A549 (cell line): ENCODE measurements at regions of chr17 and their contacts with region 1.

Region 1: DNA sequence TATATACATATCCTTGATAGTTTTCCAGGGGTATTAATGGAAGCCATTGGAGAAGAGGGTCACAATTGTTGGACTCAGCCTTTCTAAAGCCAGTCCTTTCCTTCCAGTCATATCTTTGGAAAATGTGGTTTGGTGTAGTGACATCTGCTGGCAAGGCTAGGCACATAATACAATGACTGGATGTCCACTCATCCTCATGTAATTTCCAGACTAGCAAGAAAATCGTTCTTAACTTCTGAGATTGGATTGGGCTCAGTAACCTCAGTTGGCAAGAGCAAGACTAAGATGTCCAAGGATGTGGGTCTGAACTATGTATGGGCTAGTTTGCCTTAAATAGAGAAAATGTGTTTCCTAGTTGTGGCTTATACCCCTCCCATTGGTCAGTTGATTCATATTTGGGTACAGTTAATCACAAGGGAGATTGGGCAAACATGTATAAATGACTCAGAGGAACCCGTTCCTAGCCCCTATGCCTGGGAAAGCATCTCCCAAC is 8.7 kb upstream of the KAT7 start:
- DNase-seq: peak; percentile 34 to 60
- ATAC-seq: peak; percentile 84 to 86
- H3K4me3 ChIP-seq: no peak overlapping the region
- H3K27ac ChIP-seq: no peak overlapping the region
- H3K4me1 ChIP-seq: no peaks in the 10 kb centered on the region
- CTCF ChIP-seq: peak; percentile 54
- EP300 ChIP-seq: no peak
- POLR2A ChIP-seq: no peak
- RAD21 ChIP-seq: peak; percentile 37 to 54; a peak in 4 of 5 replicates

Region 2: GRCh38 chr17:49763735-49764558 is 15.8 kb before region 1 on chr17 and contains the start of gene FAM117A:
- CTCF ChIA-PET with region 1: interaction called, 12 read pairs
- POLR2A ChIA-PET with region 1: interaction called, 12 read pairs
- DNase-seq: peak; percentile 99 to 100
- ATAC-seq: peak; percentile 98 to 99
- H3K4me3 ChIP-seq: peak within 1 kb of the TSS; percentile 61
- H3K27ac ChIP-seq: peak within 1 kb of the TSS; percentile 57 to 89
- H3K4me1 ChIP-seq: peaks cover 9% of the 10 kb centered on the region
- CTCF ChIP-seq: no peak
- EP300 ChIP-seq: no peak
- POLR2A ChIP-seq: peak; percentile 44; the same call in 1 of the 2 replicates
- RAD21 ChIP-seq: no peak
- polyA plus RNA-seq, gene FAM117A: 1.8 TPM in 2 replicates

Region 3: GRCh38 chr17:49843774-49844350 is 64.1 kb after region 1 on chr17:
- CTCF ChIA-PET with region 1: no interaction called
- POLR2A ChIA-PET with region 1: no interaction called
- DNase-seq: peak; percentile 52 to 69
- ATAC-seq: peak in 1 of 2 experiments; percentile 74; a peak in 3 of 6 replicates
- H3K4me3 ChIP-seq: no peak overlapping the region
- H3K27ac ChIP-seq: no peak overlapping the region
- H3K4me1 ChIP-seq: peaks cover 7% of the 10 kb centered on the region; the same call in 1 of the 3 replicates
- CTCF ChIP-seq: peak; percentile 46
- EP300 ChIP-seq: no peak
- POLR2A ChIP-seq: no peak
- RAD21 ChIP-seq: peak; percentile 35 to 52; a peak in 3 of 5 replicates

Region 4: GRCh38 chr17:49952209-49952911 is 172.6 kb after region 1 on chr17:
- CTCF ChIA-PET with region 1: no interaction called
- POLR2A ChIA-PET with region 1: no interaction called
- DNase-seq: peak; percentile 85 to 98
- ATAC-seq: peak; percentile 94 to 98
- H3K4me3 ChIP-seq: no peak overlapping the region
- H3K27ac ChIP-seq: no peak overlapping the region
- H3K4me1 ChIP-seq: peaks cover 5% of the 10 kb centered on the region; the same call in 1 of the 3 replicates
- CTCF ChIP-seq: peak; percentile 91
- EP300 ChIP-seq: no peak
- POLR2A ChIP-seq: no peak
- RAD21 ChIP-seq: peak; percentile 74 to 85